ENCODE measurements at regions of chr4 and their contacts with region 1.

Region 1: DNA sequence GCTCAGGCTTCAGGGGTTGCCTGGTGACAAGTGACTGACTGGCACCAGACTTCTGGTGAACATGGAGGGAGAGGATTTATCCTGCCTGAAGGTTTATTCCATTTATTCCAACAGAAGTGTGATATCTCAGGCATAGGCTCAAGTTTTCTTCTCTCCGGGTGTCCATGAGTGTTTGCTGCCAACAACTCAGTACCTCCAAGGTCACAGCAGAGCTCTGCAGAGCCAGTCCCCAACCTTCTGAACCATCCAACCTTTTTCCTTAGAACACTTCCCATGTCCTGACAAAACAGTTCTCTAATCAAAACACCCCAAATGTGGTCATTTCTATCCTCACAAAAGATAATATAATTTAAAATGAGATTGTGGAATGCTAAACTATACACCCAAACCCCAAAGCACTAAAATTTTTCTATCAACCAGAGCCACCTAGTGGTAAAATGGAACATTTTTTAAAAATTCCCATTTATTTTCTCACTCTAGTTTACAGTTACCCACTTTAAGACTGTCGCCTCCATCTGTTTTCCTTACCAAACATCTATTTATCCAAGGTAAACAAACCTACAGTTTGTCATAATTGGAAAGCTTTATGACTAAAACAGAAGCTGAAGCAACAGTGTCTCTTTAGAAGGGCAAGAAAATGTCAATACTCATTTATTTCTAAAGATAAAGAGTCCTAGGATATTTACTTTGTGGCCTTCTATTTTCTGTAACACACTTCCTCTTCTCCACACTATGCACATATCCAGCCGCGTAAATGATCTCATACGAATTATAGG is 39.6 kb downstream of the TMEM154 start:
- DNase-seq: no peak
- H3K4me3 ChIP-seq: no peak overlapping the region
- H3K27ac ChIP-seq: no peak overlapping the region
- H3K4me1 ChIP-seq: peaks cover 0 to 10% (median 5%) of the 10 kb centered on the region in 4 experiments; a peak in 4 of 7 replicates
- H3K27me3 ChIP-seq: no peaks in the 10 kb centered on the region
- CTCF ChIP-seq: peak in 2 of 3 experiments; percentile 29 to 39; a peak in 2 of 4 replicates
- EP300 ChIP-seq: no peak
- POLR2A ChIP-seq: no peak
- RAD21 ChIP-seq: peak; percentile 48 to 62

Region 2: GRCh38 chr4:152408514-152409327 is 231.5 kb before region 1 on chr4:
- CTCF ChIA-PET with region 1: interaction called, 10 read pairs
- POLR2A ChIA-PET with region 1: no interaction called
- DNase-seq: no peak
- H3K4me3 ChIP-seq: no peak overlapping the region
- H3K27ac ChIP-seq: no peak overlapping the region
- H3K4me1 ChIP-seq: no peaks in the 10 kb centered on the region
- H3K27me3 ChIP-seq: no peaks in the 10 kb centered on the region
- CTCF ChIP-seq: peak in 2 of 3 experiments; percentile 54 to 67; a peak in 2 of 4 replicates
- EP300 ChIP-seq: no peak
- POLR2A ChIP-seq: no peak
- RAD21 ChIP-seq: peak; percentile 78 to 83

Region 3: GRCh38 chr4:152577708-152578396 is 62.4 kb before region 1 on chr4:
- CTCF ChIA-PET with region 1: interaction called, 21 read pairs
- POLR2A ChIA-PET with region 1: no interaction called
- DNase-seq: no peak
- H3K4me3 ChIP-seq: no peak overlapping the region
- H3K27ac ChIP-seq: no peak overlapping the region
- H3K4me1 ChIP-seq: no peaks in the 10 kb centered on the region
- H3K27me3 ChIP-seq: no peaks in the 10 kb centered on the region
- CTCF ChIP-seq: no peak
- EP300 ChIP-seq: no peak
- POLR2A ChIP-seq: no peak
- RAD21 ChIP-seq: no peak

Region 4: GRCh38 chr4:152613841-152614721 is 26.2 kb before region 1 on chr4:
- CTCF ChIA-PET with region 1: interaction called, 17 read pairs
- POLR2A ChIA-PET with region 1: no interaction called
- DNase-seq: peak in 1 of 2 experiments; percentile 35
- H3K4me3 ChIP-seq: no peak overlapping the region
- H3K27ac ChIP-seq: no peak overlapping the region
- H3K4me1 ChIP-seq: peaks cover 0 to 7% (median under 1%) of the 10 kb centered on the region in 4 experiments; a peak in 2 of 7 replicates
- H3K27me3 ChIP-seq: no peaks in the 10 kb centered on the region
- CTCF ChIP-seq: no peak
- EP300 ChIP-seq: no peak
- POLR2A ChIP-seq: no peak
- RAD21 ChIP-seq: no peak

Region 5: GRCh38 chr4:152628128-152628527 is 12.1 kb before region 1 on chr4:
- CTCF ChIA-PET with region 1: interaction called, 23 read pairs
- POLR2A ChIA-PET with region 1: no interaction called
- DNase-seq: no peak
- H3K4me3 ChIP-seq: no peak overlapping the region
- H3K27ac ChIP-seq: no peak overlapping the region
- H3K4me1 ChIP-seq: no peaks in the 10 kb centered on the region
- H3K27me3 ChIP-seq: no peaks in the 10 kb centered on the region
- CTCF ChIP-seq: no peak
- EP300 ChIP-seq: no peak
- POLR2A ChIP-seq: no peak
- RAD21 ChIP-seq: no peak

Region 6: DNA sequence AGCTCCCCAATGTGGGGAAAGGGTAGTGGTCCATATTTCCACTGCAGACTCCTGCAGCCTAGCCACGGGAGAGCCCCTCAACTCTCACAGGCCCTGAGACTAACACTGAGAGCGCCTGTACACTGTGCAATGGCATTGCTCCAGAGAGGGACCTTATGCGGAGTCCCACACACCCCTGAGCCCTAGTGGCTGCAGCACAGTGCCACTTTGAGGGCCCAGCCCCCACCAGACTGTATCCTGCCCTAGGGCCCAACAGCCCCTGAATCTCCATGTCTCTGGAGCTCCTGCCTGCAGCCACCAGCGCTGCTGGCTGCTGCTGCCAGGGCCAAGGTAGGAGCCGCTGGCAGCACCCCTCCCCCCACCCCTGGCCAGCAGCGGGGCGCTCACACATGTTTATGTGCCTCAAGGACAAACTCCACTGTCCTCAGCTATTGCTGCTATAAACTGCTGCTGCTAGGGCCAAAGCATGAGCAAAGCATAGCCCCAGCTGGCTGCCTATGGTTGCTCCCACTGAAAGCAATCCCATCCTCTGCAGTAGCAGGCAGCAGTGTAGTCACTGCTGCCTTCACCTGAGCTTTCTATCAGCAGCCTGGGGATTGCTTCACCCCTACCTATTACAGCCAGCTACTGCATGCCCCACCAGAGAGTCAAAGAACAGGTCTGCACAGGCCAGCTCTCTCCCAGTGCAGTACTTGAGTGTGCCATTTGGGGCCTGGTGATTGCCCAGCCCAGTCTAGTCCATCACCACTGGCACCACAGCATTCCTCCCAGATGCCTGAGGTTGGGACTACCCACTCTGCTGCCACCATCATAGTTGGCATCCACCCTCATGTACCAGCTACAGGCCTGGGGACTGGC is 15.3 kb after region 1 on chr4:
- CTCF ChIA-PET with region 1: interaction called, 14 read pairs
- POLR2A ChIA-PET with region 1: no interaction called
- DNase-seq: no peak
- H3K4me3 ChIP-seq: no peak overlapping the region
- H3K27ac ChIP-seq: no peak overlapping the region
- H3K4me1 ChIP-seq: peaks cover 3 to 9% (median 5%) of the 10 kb centered on the region in 4 experiments
- H3K27me3 ChIP-seq: no peaks in the 10 kb centered on the region
- CTCF ChIP-seq: no peak
- EP300 ChIP-seq: no peak
- POLR2A ChIP-seq: no peak
- RAD21 ChIP-seq: no peak

Region 7: GRCh38 chr4:152705903-152706302 is 65.7 kb after region 1 on chr4:
- CTCF ChIA-PET with region 1: interaction called, 21 read pairs
- POLR2A ChIA-PET with region 1: no interaction called
- DNase-seq: no peak
- H3K4me3 ChIP-seq: no peak overlapping the region
- H3K27ac ChIP-seq: no peak overlapping the region
- H3K4me1 ChIP-seq: peaks cover 7 to 21% (median 14%) of the 10 kb centered on the region in 4 experiments; a peak in 6 of 7 replicates
- H3K27me3 ChIP-seq: no peaks in the 10 kb centered on the region
- CTCF ChIP-seq: peak in 2 of 3 experiments; percentile 62 to 69; a peak in 3 of 4 replicates
- EP300 ChIP-seq: no peak
- POLR2A ChIP-seq: no peak
- RAD21 ChIP-seq: peak; percentile 33 to 62

Region 8: DNA sequence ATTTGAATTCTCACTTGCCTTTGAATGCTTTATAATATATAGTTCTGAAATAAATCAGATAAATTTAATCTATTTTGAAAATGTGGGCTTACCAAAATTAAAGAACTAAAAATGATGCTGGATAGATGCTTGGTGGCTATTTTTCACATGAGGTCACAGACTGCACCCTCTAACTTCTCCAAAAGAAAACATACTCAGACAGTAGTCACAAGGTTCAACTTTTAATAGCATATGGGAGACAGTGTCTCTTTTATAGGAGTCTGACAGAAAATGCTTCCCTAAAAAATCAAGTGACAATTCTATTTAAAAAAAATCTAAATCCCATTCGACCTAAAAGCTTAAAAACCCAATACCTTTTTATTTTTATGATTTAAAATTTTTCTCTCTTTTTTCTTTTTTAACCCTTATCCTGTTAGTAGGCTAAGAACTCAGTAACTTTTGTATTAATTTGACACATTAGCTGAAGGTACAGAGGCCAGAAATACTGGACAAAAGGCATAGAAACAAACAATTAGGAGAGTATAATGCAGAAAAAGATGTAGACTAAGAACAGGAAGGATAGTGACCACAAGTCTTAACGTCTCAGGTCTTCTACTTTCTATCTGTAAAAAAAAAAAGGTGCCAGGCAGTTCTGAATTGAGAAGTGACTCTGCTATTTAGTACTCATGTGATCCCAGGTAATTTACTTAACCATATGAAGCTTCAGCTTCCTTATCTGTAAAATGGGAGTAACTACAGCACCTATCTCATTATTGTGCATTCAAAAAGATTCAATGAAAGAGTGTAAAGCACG is 131.7 kb after region 1 on chr4:
- CTCF ChIA-PET with region 1: no interaction called
- POLR2A ChIA-PET with region 1: no interaction called
- DNase-seq: no peak
- H3K4me3 ChIP-seq: no peak overlapping the region
- H3K27ac ChIP-seq: no peak overlapping the region
- H3K4me1 ChIP-seq: no peaks in the 10 kb centered on the region
- H3K27me3 ChIP-seq: no peaks in the 10 kb centered on the region
- CTCF ChIP-seq: no peak
- EP300 ChIP-seq: no peak
- POLR2A ChIP-seq: no peak
- RAD21 ChIP-seq: no peak